HCT116 (cell line): ENCODE measurements at regions of chr12 and their contacts with region 1.

Region 1: DNA sequence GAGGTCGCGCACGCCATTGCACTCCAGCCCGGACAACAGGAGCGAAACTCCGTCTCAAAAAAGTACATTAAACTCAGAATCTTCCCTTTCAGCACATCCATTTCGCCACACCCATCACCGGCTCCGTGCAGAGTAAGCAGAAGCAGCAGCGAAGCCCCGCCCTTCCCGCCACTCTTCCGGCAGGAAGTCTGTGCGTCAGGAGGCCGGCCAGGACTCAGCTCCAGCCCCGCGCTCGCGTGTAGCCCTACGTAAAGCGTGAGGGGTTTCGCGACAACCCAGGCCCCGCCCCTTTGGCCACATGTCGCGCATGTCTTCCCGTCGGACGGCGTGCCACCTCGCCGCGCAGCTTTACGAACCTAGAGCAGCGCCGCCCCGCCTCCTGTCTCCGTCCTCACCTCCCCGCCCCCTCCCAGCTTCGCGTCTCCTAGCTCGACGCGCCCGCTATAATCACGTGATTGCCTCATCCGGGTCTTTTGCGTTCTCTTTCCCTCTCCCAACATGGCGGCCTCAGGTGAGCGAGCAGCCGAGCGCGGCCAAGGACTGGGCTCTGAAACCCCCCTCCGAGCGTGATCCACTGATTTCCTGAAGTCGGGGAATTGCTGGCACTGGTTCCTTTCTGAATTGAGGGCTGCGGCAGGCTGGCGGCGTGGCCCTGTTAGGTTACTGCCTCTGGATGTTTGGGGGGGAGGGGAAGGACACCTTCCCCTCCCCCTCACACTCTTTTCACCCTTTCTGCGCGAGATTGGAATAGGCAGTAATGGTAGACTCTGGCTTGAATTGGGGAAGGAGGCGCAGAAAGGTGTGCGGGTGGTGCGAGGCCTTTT is at the start of gene EIF4B:
- DNase-seq: peak; percentile 99
- ATAC-seq: peak; percentile 90
- H3K4me3 ChIP-seq: peak within 1 kb of the TSS; percentile 98
- H3K27ac ChIP-seq: peak within 1 kb of the TSS; percentile 98
- H3K4me1 ChIP-seq: peaks cover 18 to 45% of the 10 kb centered on the region in 2 experiments
- H3K27me3 ChIP-seq: no peaks in the 10 kb centered on the region
- CTCF ChIP-seq: no peak
- POLR2A ChIP-seq: peak; percentile 45
- RAD21 ChIP-seq: no peak
- total RNA-seq, gene EIF4B: 809 TPM

Region 2: GRCh38 chr12:52203075-52203921 is 802.9 kb before region 1 on chr12:
- CTCF ChIA-PET with region 1: no interaction called
- POLR2A ChIA-PET with region 1: no interaction called
- RAD21 ChIA-PET with region 1: no interaction called
- intact Hi-C with region 1: no loop called
- DNase-seq: peak; percentile 56
- ATAC-seq: peak; percentile 75
- H3K4me3 ChIP-seq: no peak overlapping the region
- H3K27ac ChIP-seq: no peak overlapping the region
- H3K4me1 ChIP-seq: peaks cover 16 to 77% of the 10 kb centered on the region in 2 experiments
- H3K27me3 ChIP-seq: no peaks in the 10 kb centered on the region
- CTCF ChIP-seq: no peak
- POLR2A ChIP-seq: no peak
- RAD21 ChIP-seq: no peak

Region 3: GRCh38 chr12:52924764-52925716 is 81.2 kb before region 1 on chr12:
- CTCF ChIA-PET with region 1: no interaction called
- POLR2A ChIA-PET with region 1: no interaction called
- RAD21 ChIA-PET with region 1: no interaction called
- intact Hi-C with region 1: no loop called
- DNase-seq: peak; percentile 90
- ATAC-seq: peak; percentile 68
- H3K4me3 ChIP-seq: peak overlapping the region; percentile 6 to 51
- H3K27ac ChIP-seq: peak overlapping the region; percentile 95
- H3K4me1 ChIP-seq: peaks cover 67 to 94% of the 10 kb centered on the region in 2 experiments
- H3K27me3 ChIP-seq: no peaks in the 10 kb centered on the region
- CTCF ChIP-seq: no peak
- POLR2A ChIP-seq: no peak
- RAD21 ChIP-seq: no peak

Region 4: GRCh38 chr12:52992699-52993557 is 13.3 kb before region 1 on chr12:
- CTCF ChIA-PET with region 1: no interaction called
- POLR2A ChIA-PET with region 1: interaction called, 15 read pairs
- RAD21 ChIA-PET with region 1: no interaction called
- intact Hi-C with region 1: no loop called
- DNase-seq: peak; percentile 80
- ATAC-seq: peak; percentile 84
- H3K4me3 ChIP-seq: peak overlapping the region in 1 of 2 experiments; percentile 2; a peak in 1 of 4 replicates
- H3K27ac ChIP-seq: peak overlapping the region; percentile 78
- H3K4me1 ChIP-seq: peaks cover 23 to 35% of the 10 kb centered on the region in 2 experiments
- H3K27me3 ChIP-seq: no peaks in the 10 kb centered on the region
- CTCF ChIP-seq: no peak
- POLR2A ChIP-seq: no peak
- RAD21 ChIP-seq: no peak